ENCODE measurements at regions of chr2 and their contacts with region 1.

Region 1: DNA sequence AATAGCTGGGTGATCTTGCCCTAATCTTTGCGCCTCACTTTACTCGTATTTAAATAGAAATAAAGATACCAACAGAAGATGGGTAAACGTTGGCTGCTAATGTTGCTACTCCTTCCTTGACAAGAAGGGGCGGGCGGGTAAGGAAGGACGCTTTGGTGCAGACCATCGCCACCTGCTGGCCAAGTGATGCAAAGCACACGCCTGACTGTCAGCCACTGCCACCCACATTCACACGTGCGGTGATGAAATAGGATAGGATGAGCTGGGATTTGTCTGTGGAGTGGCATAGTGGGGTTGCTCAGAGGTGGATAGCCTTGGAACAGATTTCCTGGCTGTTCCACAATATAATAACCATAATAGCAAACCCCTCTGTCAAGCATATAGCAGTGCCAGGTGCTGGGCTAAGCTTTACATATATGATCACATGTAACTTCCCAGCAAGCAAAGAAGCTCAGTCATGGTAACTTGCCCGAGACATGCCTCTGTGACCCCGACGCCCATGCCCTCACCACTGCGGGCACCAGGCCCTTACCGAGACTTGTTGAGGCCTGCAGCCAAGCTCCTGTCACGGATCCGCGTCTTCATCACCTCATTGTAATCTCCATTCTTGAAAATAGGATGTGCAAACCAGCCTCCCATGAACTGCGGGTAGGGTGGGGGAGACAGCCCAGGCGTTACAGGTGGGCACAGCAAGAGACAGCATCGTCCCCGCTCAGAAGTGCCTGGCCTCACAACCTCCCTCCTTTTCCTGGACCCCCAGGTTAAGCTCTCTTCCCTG is 39.3 kb downstream of the LCT start:
- DNase-seq: peak; percentile 84
- ATAC-seq: peak; percentile 87
- H3K4me3 Mint-ChIP-seq: no peak overlapping the region
- H3K27ac Mint-ChIP-seq: no peak overlapping the region; the same call in 1 of the 2 replicates
- H3K4me1 Mint-ChIP-seq: peaks cover 7% of the 10 kb centered on the region; the same call in 1 of the 2 replicates
- H3K27me3 Mint-ChIP-seq: no peaks in the 10 kb centered on the region
- CTCF ChIP-seq: peak; percentile 83

Region 2: GRCh38 chr2:135783439-135783838 is 14.2 kb before region 1 on chr2:
- CTCF ChIA-PET with region 1: interaction called, 12 read pairs
- POLR2A ChIA-PET with region 1: interaction called, 5 read pairs
- DNase-seq: no peak
- ATAC-seq: no peak
- H3K4me3 Mint-ChIP-seq: no peak overlapping the region
- H3K27ac Mint-ChIP-seq: no peak overlapping the region
- H3K4me1 Mint-ChIP-seq: peaks cover 17% of the 10 kb centered on the region
- H3K27me3 Mint-ChIP-seq: no peaks in the 10 kb centered on the region
- CTCF ChIP-seq: no peak

Region 3: GRCh38 chr2:135817951-135818350 is 20.3 kb after region 1 on chr2:
- CTCF ChIA-PET with region 1: interaction called, 15 read pairs
- POLR2A ChIA-PET with region 1: no interaction called
- DNase-seq: no peak
- ATAC-seq: no peak
- H3K4me3 Mint-ChIP-seq: no peak overlapping the region
- H3K27ac Mint-ChIP-seq: no peak overlapping the region
- H3K4me1 Mint-ChIP-seq: no peaks in the 10 kb centered on the region
- H3K27me3 Mint-ChIP-seq: peaks cover 3% of the 10 kb centered on the region; the same call in 1 of the 2 replicates
- CTCF ChIP-seq: no peak

Measured in WTC11 (cell line).